ENCODE measurements at regions of chr14 and their contacts with region 1.

Region 1: GRCh38 chr14:84025106-84026012 is 1504.6 kb upstream of the FLRT2 start:
- DNase-seq: peak; percentile 55
- H3K4me3 ChIP-seq: no peak overlapping the region
- H3K27ac ChIP-seq: peak overlapping the region; percentile 83
- H3K4me1 ChIP-seq: peaks cover 63% of the 10 kb centered on the region
- H3K27me3 ChIP-seq: no peaks in the 10 kb centered on the region
- CTCF ChIP-seq: no peak

Region 2: DNA sequence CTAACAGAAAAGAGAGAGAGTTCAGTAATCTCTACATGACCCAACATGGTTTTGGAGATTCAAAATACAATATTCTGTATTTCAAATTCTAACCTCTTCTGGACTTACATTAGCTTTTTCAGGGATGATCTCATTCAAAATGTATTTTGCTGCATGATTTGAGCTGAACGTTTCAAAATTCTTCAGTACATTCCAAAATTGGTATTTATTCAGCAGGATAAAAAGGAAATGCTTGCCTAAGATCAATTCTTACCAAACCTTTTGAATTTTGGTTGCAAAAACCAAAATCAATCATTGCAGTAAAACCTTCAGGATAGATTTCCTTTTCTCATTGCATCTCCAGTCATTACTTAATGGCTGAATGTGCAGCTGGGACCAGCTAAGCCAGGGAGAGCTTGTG is 730.4 kb before region 1 on chr14:
- CTCF ChIA-PET with region 1: no interaction called
- POLR2A ChIA-PET with region 1: no interaction called
- intact Hi-C with region 1: loop called (anchors 10 kb)
- DNase-seq: peak; percentile 82
- H3K4me3 ChIP-seq: no peak overlapping the region
- H3K27ac ChIP-seq: peak overlapping the region; percentile 83
- H3K4me1 ChIP-seq: peaks cover 46% of the 10 kb centered on the region
- H3K27me3 ChIP-seq: no peaks in the 10 kb centered on the region
- CTCF ChIP-seq: no peak

Region 3: GRCh38 chr14:83594874-83595273 is 430.5 kb before region 1 on chr14:
- CTCF ChIA-PET with region 1: no interaction called
- POLR2A ChIA-PET with region 1: no interaction called
- intact Hi-C with region 1: loop called (anchors 5 kb)
- DNase-seq: no peak
- H3K4me3 ChIP-seq: no peak overlapping the region
- H3K27ac ChIP-seq: no peak overlapping the region
- H3K4me1 ChIP-seq: no peaks in the 10 kb centered on the region
- H3K27me3 ChIP-seq: no peaks in the 10 kb centered on the region
- CTCF ChIP-seq: no peak

Region 4: DNA sequence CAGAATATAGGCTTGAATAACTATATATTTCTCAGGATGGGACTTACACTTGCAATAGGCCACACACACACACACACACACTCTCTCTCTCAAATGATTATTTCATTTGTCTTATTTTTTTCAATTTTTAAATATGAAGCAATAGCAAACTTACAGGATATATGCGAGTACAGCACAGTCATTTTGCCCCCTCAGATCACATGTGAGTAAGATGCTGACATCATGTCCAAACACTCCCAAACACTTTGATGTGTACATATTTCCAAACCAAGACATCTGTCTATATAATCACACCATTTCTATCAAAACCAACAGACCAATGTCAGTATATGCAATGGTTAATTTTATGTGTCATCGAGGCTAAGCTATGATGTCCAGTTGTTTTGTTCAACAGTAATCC is 31.3 kb before region 1 on chr14:
- CTCF ChIA-PET with region 1: no interaction called
- POLR2A ChIA-PET with region 1: no interaction called
- intact Hi-C with region 1: no loop called
- DNase-seq: no peak
- H3K4me3 ChIP-seq: no peak overlapping the region
- H3K27ac ChIP-seq: no peak overlapping the region
- H3K4me1 ChIP-seq: no peaks in the 10 kb centered on the region
- H3K27me3 ChIP-seq: no peaks in the 10 kb centered on the region
- CTCF ChIP-seq: no peak

Region 5: GRCh38 chr14:84254290-84254689 is 228.9 kb after region 1 on chr14:
- CTCF ChIA-PET with region 1: no interaction called
- POLR2A ChIA-PET with region 1: no interaction called
- intact Hi-C with region 1: loop called (anchors 5 kb)
- DNase-seq: peak; percentile 72
- H3K4me3 ChIP-seq: no peak overlapping the region
- H3K27ac ChIP-seq: peak overlapping the region; percentile 27
- H3K4me1 ChIP-seq: peaks cover 52% of the 10 kb centered on the region
- H3K27me3 ChIP-seq: no peaks in the 10 kb centered on the region
- CTCF ChIP-seq: no peak

Region 6: GRCh38 chr14:84323978-84324377 is 298.6 kb after region 1 on chr14:
- CTCF ChIA-PET with region 1: no interaction called
- POLR2A ChIA-PET with region 1: no interaction called
- intact Hi-C with region 1: loop called (anchors 10 kb)
- DNase-seq: peak; percentile 67
- H3K4me3 ChIP-seq: no peak overlapping the region
- H3K27ac ChIP-seq: peak overlapping the region; percentile 6
- H3K4me1 ChIP-seq: peaks cover 14% of the 10 kb centered on the region
- H3K27me3 ChIP-seq: no peaks in the 10 kb centered on the region
- CTCF ChIP-seq: no peak

Region 7: GRCh38 chr14:84591827-84592445 is 566.6 kb after region 1 on chr14:
- CTCF ChIA-PET with region 1: no interaction called
- POLR2A ChIA-PET with region 1: no interaction called
- intact Hi-C with region 1: loop called (anchors 5 kb)
- DNase-seq: peak; percentile 96
- H3K4me3 ChIP-seq: no peak overlapping the region
- H3K27ac ChIP-seq: peak overlapping the region; percentile 69
- H3K4me1 ChIP-seq: peaks cover 36% of the 10 kb centered on the region
- H3K27me3 ChIP-seq: no peaks in the 10 kb centered on the region
- CTCF ChIP-seq: no peak

Region 8: DNA sequence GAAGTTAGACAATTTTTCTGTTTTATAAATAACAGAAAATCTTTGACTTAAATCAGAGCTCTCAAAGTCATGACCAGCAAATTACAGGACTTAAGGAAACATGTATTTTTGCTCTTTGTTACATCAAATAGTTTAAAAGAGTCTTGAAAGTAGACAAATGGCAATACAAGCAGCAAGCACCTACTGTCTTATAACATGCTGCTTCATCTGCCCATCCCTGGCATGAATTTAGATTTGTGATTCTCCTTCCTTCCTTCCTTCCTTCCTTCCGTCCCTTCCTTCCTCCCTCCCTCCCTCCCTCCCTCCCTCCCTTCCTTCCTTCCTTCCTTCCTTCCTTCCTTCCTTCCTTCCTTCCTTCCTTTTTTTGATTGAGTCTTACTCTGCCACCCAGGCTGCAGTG is 789.0 kb after region 1 on chr14:
- CTCF ChIA-PET with region 1: no interaction called
- POLR2A ChIA-PET with region 1: no interaction called
- intact Hi-C with region 1: loop called (anchors 2 kb)
- DNase-seq: peak; percentile 85
- H3K4me3 ChIP-seq: no peak overlapping the region
- H3K27ac ChIP-seq: peak overlapping the region; percentile 92
- H3K4me1 ChIP-seq: peaks cover 7% of the 10 kb centered on the region
- H3K27me3 ChIP-seq: no peaks in the 10 kb centered on the region
- CTCF ChIP-seq: no peak

Measured in A673 (cell line).